Psoas muscle (tissue), 8 donors: ENCODE measurements at regions of chr1 and their contacts with region 1.

Region 1: GRCh38 chr1:27300341-27301051 is 21.5 kb upstream of the TMEM222 start:
- DNase-seq: peak; percentile 78 to 91
- ATAC-seq: peak; percentile 79 to 96 (median 88)
- H3K4me3 ChIP-seq: no peak overlapping the region
- H3K27ac ChIP-seq: peak overlapping the region; percentile 66
- H3K4me1 ChIP-seq: peaks cover 30% of the 10 kb centered on the region
- H3K27me3 ChIP-seq: no peaks in the 10 kb centered on the region
- CTCF ChIP-seq: peak; percentile 99

Region 2: GRCh38 chr1:27102707-27103491 is 197.6 kb before region 1 on chr1:
- intact Hi-C with region 1: loop called in 1 of 2 experiments (anchors 5 kb)
- DNase-seq: peak; percentile 75 to 86
- ATAC-seq: peak; percentile 78 to 90 (median 86)
- H3K4me3 ChIP-seq: no peak overlapping the region
- H3K27ac ChIP-seq: no peak overlapping the region
- H3K4me1 ChIP-seq: no peaks in the 10 kb centered on the region
- H3K27me3 ChIP-seq: no peaks in the 10 kb centered on the region
- CTCF ChIP-seq: peak; percentile 98

Region 3: DNA sequence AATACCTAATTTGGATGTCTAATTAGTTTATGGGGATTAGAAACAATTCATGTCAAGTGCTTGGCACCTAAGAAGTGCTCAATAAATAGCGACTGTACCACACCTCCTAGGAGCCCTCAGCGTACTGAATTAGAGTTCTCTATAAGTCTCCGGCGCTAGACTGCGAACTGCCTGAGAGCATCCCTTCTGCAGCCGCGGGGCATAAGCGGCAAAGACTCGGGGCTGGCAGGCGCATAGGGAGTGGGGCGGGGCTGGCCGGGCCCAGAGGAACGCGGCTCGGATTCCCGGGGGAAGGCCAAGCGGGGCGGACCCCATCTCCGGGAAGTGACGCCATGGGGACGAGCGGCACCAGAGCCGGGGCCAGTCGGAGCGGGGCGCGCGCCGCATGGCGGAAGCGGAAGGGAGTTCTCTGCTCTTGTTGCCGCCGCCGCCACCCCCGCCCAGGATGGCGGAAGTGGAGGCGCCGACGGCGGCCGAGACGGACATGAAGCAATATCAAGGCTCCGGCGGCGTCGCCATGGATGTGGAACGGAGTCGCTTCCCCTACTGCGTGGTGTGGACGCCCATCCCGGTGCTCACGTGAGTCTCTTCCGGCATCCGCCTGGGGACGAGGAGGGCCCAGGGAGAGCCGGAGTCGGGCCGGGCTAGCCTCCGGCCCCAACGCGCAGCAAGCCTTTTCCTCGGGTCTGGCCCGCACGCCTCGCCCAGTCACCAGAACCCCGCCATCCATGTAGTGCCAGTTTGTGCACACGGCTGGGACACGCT is 21.5 kb after region 1 on chr1 and contains the start of gene TMEM222:
- intact Hi-C with region 1: no loop called
- DNase-seq: peak; percentile 99
- ATAC-seq: peak; percentile 99
- H3K4me3 ChIP-seq: peak within 1 kb of the TSS; percentile 99
- H3K27ac ChIP-seq: peak within 1 kb of the TSS; percentile 93
- H3K4me1 ChIP-seq: peaks cover 27% of the 10 kb centered on the region
- H3K27me3 ChIP-seq: peaks cover 0 to 19% (median 0%) of the 10 kb centered on the region in 3 donors
- CTCF ChIP-seq: peak; percentile 17
- total RNA-seq, gene TMEM222: 20.7 to 35.0 (median 23.8) TPM

Region 4: GRCh38 chr1:27357281-27358037 is 57.0 kb after region 1 on chr1:
- intact Hi-C with region 1: loop called in 1 of 2 experiments (anchors 2 kb)
- DNase-seq: peak; percentile 77 to 88
- ATAC-seq: peak; percentile 82 to 95 (median 90)
- H3K4me3 ChIP-seq: peak overlapping the region; percentile 25
- H3K27ac ChIP-seq: no peak overlapping the region
- H3K4me1 ChIP-seq: no peaks in the 10 kb centered on the region
- H3K27me3 ChIP-seq: no peaks in the 10 kb centered on the region
- CTCF ChIP-seq: peak; percentile 97

Region 5: GRCh38 chr1:27662707-27663393 is 362.4 kb after region 1 on chr1:
- intact Hi-C with region 1: loop called in 1 of 2 experiments (anchors 5 kb)
- DNase-seq: peak; percentile 80 to 85
- ATAC-seq: peak; percentile 61 to 71 (median 68)
- H3K4me3 ChIP-seq: no peak overlapping the region
- H3K27ac ChIP-seq: peak overlapping the region; percentile 34
- H3K4me1 ChIP-seq: peaks cover 8% of the 10 kb centered on the region
- H3K27me3 ChIP-seq: no peaks in the 10 kb centered on the region
- CTCF ChIP-seq: peak; percentile 94